ENCODE measurements at regions of chr14 and their contacts with region 1.

Region 1: GRCh38 chr14:24605435-24606190 is 3.9 kb downstream of the GZMH start:
- DNase-seq: peak; percentile 87
- ATAC-seq: peak; percentile 79
- H3K4me3 Mint-ChIP-seq: peak overlapping the region; percentile 73
- H3K27ac Mint-ChIP-seq: peak overlapping the region; percentile 92
- H3K4me1 Mint-ChIP-seq: peaks cover 55% of the 10 kb centered on the region
- H3K27me3 Mint-ChIP-seq: no peaks in the 10 kb centered on the region

Region 2: GRCh38 chr14:24058260-24058950 is 547.2 kb before region 1 on chr14:
- CTCF ChIA-PET with region 1: no interaction called
- DNase-seq: peak; percentile 69
- ATAC-seq: peak; percentile 74
- H3K4me3 Mint-ChIP-seq: no peak overlapping the region
- H3K27ac Mint-ChIP-seq: no peak overlapping the region
- H3K4me1 Mint-ChIP-seq: peaks cover under 1% of the 10 kb centered on the region
- H3K27me3 Mint-ChIP-seq: peaks cover 11% of the 10 kb centered on the region

Region 3: DNA sequence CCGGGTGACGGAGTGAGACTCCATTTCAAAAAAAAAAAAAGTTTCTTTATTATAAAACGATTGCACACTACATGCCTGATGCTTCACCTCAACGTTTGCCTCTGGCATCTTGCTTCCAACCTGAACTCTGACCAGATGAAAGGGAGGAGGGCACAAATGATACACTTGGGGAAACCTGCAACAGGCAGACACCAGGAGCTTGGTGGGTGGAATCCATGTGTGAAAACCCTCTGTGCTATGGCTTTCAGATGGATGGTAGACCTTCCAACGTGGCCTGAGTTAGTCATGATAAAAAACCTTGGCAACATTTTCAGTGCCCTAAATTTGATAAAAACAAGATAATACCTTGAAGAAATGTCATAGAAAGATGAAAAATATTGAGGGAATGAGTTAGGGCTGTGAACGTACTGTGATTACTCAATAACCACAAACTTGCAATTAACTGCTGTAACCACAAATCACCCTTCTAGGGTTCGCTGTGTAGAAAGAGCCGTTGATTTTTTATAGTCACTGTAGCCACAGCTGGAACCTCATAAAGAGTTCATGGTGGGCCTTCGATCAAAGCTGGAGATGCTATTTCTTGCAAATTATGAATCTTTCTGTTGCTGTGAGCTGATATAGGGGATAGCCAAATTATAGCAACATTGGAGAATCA is 54.4 kb after region 1 on chr14:
- CTCF ChIA-PET with region 1: interaction called, 11 read pairs
- DNase-seq: no peak
- ATAC-seq: peak; percentile 65
- H3K4me3 Mint-ChIP-seq: peak overlapping the region; percentile 17
- H3K27ac Mint-ChIP-seq: peak overlapping the region; percentile 84
- H3K4me1 Mint-ChIP-seq: peaks cover 66% of the 10 kb centered on the region
- H3K27me3 Mint-ChIP-seq: no peaks in the 10 kb centered on the region

Region 4: DNA sequence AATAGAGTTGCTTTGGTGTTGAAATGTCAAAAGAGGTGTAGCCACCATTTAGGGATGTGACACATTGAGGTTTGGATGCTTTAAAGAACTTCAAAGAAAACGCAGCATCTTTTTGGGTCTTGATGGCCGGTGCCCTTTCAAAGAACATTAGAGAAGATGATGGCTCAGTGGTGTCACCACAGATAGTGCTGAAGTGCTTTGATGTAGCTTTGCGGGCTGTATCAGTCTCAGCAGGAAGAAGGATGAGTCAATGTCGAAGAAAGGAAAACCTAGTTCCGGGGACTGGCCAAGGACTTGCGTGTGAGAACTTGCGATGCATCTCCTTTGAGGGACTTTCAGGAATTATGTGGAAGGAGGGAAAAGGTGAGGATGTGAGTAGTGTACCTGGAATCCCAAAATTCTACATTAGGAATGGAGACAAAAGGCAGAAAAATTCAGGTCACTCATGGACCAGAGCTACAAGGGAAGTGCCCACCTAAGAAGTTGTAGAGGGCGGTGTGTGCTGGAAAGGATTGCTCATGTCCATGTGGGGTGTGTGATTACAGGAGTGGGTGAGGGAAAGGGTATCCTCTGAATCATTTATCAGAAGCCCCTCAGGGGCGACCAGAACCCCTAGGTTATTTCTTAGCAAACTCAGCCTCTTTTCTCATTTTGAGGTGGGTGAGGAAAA is 68.1 kb after region 1 on chr14:
- CTCF ChIA-PET with region 1: interaction called, 87 read pairs
- DNase-seq: peak; percentile 90
- ATAC-seq: peak; percentile 77
- H3K4me3 Mint-ChIP-seq: peak overlapping the region; percentile 74
- H3K27ac Mint-ChIP-seq: peak overlapping the region; percentile 100
- H3K4me1 Mint-ChIP-seq: peaks cover 89% of the 10 kb centered on the region
- H3K27me3 Mint-ChIP-seq: no peaks in the 10 kb centered on the region

Region 5: DNA sequence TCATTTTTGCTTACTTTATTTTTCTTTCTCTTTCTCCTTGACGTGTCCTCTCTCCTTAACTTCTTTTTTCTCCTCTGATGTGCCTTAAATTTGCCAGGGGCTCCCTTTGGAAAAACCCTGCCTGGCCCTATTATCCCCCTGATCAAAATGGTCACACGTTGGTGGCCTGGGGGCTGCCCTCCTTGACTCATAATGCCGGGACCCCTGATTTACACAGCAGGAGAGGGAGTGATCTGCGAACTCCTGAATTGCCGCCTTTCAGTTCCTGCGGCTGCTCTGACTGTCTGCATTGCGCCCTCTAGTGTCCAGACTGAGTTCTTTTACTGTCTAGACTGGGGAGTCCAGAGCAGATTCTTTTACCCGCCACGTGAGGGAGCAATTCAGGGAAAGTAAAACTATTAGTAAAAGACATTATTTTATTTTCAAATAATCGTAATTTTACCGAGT is 73.2 kb after region 1 on chr14:
- CTCF ChIA-PET with region 1: interaction called, 87 read pairs
- DNase-seq: peak; percentile 91
- ATAC-seq: peak; percentile 73
- H3K4me3 Mint-ChIP-seq: peak overlapping the region; percentile 72
- H3K27ac Mint-ChIP-seq: peak overlapping the region; percentile 90
- H3K4me1 Mint-ChIP-seq: peaks cover 70% of the 10 kb centered on the region
- H3K27me3 Mint-ChIP-seq: no peaks in the 10 kb centered on the region

Region 6: DNA sequence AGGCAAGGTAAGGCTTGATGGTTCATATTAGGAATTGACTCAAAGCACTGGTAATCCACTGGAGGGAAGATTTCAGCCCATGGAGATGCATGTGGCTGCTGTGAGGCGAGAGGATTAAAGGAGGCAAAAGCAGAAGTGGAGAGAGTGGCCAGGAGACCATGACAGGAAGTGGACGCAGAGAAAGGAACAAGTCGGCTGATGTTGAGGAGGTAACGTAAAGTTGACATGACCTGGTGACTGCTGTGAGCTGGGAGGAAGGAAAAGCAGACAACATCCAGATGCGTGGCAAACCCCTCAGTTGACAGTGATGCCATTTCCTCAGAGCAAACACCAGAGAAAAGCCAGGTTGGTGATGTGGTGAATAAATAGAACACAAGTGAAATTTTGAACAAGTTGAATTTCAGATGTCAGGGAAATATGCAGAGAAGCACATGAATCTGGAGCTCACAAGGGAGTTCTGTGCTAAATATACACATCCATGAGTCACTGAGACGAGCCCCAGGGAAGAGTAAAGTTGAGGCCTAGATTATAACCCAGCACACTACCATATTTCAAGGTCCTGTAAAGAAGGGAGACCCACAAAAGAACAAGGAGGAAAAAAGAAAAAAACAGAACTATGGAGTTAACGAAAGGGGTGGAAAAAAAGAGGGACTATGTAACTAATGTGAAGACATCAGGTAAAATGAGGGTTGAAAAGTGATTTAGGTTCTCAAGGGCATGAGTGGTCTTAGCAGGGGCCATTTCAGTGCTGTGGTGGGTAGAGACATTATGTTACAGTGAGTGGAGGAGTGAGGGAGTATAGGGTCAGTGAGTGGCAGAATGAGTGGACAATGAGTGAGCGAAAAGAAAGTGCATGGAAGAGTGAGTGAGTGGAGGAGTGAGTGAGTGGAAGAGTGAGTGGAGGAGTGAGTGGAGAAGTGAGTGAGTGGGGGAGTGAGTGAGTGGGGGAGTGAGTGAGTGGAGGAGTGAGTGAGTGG is 89.9 kb after region 1 on chr14:
- CTCF ChIA-PET with region 1: interaction called, 29 read pairs
- DNase-seq: peak; percentile 61
- ATAC-seq: peak; percentile 21
- H3K4me3 Mint-ChIP-seq: no peak overlapping the region
- H3K27ac Mint-ChIP-seq: no peak overlapping the region
- H3K4me1 Mint-ChIP-seq: peaks cover 28% of the 10 kb centered on the region
- H3K27me3 Mint-ChIP-seq: no peaks in the 10 kb centered on the region

Region 7: GRCh38 chr14:24710403-24711112 is 104.9 kb after region 1 on chr14:
- CTCF ChIA-PET with region 1: interaction called, 36 read pairs
- DNase-seq: peak; percentile 77
- ATAC-seq: peak; percentile 77
- H3K4me3 Mint-ChIP-seq: no peak overlapping the region
- H3K27ac Mint-ChIP-seq: no peak overlapping the region
- H3K4me1 Mint-ChIP-seq: peaks cover 4% of the 10 kb centered on the region
- H3K27me3 Mint-ChIP-seq: no peaks in the 10 kb centered on the region